H1 (cell line): ENCODE measurements at regions of chr5 and their contacts with region 1.

Region 1: DNA sequence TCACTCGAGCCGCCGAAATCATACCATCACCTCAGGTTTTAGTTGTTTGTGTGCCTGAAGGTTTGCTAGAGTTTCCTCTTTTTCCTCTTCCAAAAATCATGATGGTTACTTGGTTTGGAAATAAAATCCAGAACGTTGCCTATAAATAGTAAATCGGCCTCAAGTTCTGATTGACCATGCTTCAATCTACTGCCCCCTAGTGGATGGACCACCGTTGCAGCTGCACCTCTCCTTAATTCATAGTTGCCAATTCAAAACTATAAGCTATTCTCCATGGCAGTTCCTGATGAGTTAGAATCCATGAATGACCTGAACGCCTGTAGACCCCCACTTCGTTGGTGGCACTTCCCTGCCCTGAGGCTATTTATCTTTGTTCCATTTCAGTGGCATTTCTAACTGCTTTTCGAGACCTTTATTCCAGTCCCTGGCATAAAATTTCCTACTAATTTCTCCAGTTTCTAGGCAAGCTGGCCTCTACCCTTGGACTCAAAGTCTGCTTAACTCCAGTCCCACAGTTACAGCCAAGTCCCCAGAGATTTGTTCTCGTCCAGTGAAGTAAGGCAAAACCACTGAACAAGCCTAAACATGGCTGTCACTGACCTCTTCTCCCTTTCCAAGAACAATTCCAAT is 422.6 kb downstream of the EFNA5 start:
- DNase-seq: peak; percentile 34 to 87
- H3K4me3 ChIP-seq: no peak overlapping the region
- H3K27ac ChIP-seq: no peak overlapping the region
- H3K4me1 ChIP-seq: no peaks in the 10 kb centered on the region; a peak in 1 of 7 replicates
- H3K27me3 ChIP-seq: no peaks in the 10 kb centered on the region
- CTCF ChIP-seq: peak; percentile 61 to 91 (median 67)
- EP300 ChIP-seq: no peak
- POLR2A ChIP-seq: no peak
- RAD21 ChIP-seq: peak; percentile 80 to 85

Region 2: GRCh38 chr5:107104040-107104995 is 143.9 kb before region 1 on chr5:
- CTCF ChIA-PET with region 1: interaction called, 20 read pairs
- POLR2A ChIA-PET with region 1: no interaction called
- DNase-seq: peak in 1 of 2 experiments; percentile 51
- H3K4me3 ChIP-seq: no peak overlapping the region
- H3K27ac ChIP-seq: no peak overlapping the region
- H3K4me1 ChIP-seq: no peaks in the 10 kb centered on the region
- H3K27me3 ChIP-seq: peaks cover 0 to 1% (median 0%) of the 10 kb centered on the region in 4 experiments; a peak in 1 of 7 replicates
- CTCF ChIP-seq: peak; percentile 14 to 71 (median 56)
- EP300 ChIP-seq: no peak
- POLR2A ChIP-seq: no peak
- RAD21 ChIP-seq: peak; percentile 76 to 87

Region 3: GRCh38 chr5:107184066-107184465 is 64.1 kb before region 1 on chr5:
- CTCF ChIA-PET with region 1: no interaction called
- POLR2A ChIA-PET with region 1: no interaction called
- DNase-seq: no peak
- H3K4me3 ChIP-seq: no peak overlapping the region
- H3K27ac ChIP-seq: no peak overlapping the region
- H3K4me1 ChIP-seq: no peaks in the 10 kb centered on the region
- H3K27me3 ChIP-seq: no peaks in the 10 kb centered on the region
- CTCF ChIP-seq: no peak
- EP300 ChIP-seq: no peak
- POLR2A ChIP-seq: no peak
- RAD21 ChIP-seq: no peak

Region 4: GRCh38 chr5:107235167-107235566 is 13.0 kb before region 1 on chr5:
- CTCF ChIA-PET with region 1: interaction called, 23 read pairs
- POLR2A ChIA-PET with region 1: no interaction called
- DNase-seq: no peak
- H3K4me3 ChIP-seq: no peak overlapping the region
- H3K27ac ChIP-seq: no peak overlapping the region
- H3K4me1 ChIP-seq: no peaks in the 10 kb centered on the region
- H3K27me3 ChIP-seq: no peaks in the 10 kb centered on the region
- CTCF ChIP-seq: no peak
- EP300 ChIP-seq: no peak
- POLR2A ChIP-seq: no peak
- RAD21 ChIP-seq: no peak

Region 5: GRCh38 chr5:107268241-107268640 is 20.1 kb after region 1 on chr5:
- CTCF ChIA-PET with region 1: interaction called, 20 read pairs
- POLR2A ChIA-PET with region 1: no interaction called
- DNase-seq: no peak
- H3K4me3 ChIP-seq: no peak overlapping the region
- H3K27ac ChIP-seq: no peak overlapping the region
- H3K4me1 ChIP-seq: 0 out of 7 replicates have a peak, but pooled peaks cover 0 to 2% (median 0%) of the 10 kb centered on the region in 4 experiments
- H3K27me3 ChIP-seq: no peaks in the 10 kb centered on the region
- CTCF ChIP-seq: no peak
- EP300 ChIP-seq: no peak
- POLR2A ChIP-seq: no peak
- RAD21 ChIP-seq: no peak

Region 6: GRCh38 chr5:107322936-107323335 is 74.8 kb after region 1 on chr5:
- CTCF ChIA-PET with region 1: no interaction called
- POLR2A ChIA-PET with region 1: no interaction called
- DNase-seq: no peak
- H3K4me3 ChIP-seq: no peak overlapping the region
- H3K27ac ChIP-seq: no peak overlapping the region
- H3K4me1 ChIP-seq: no peaks in the 10 kb centered on the region
- H3K27me3 ChIP-seq: peaks cover 0 to 1% (median 0%) of the 10 kb centered on the region in 4 experiments; a peak in 1 of 7 replicates
- CTCF ChIP-seq: no peak
- EP300 ChIP-seq: no peak
- POLR2A ChIP-seq: no peak
- RAD21 ChIP-seq: no peak

Region 7: DNA sequence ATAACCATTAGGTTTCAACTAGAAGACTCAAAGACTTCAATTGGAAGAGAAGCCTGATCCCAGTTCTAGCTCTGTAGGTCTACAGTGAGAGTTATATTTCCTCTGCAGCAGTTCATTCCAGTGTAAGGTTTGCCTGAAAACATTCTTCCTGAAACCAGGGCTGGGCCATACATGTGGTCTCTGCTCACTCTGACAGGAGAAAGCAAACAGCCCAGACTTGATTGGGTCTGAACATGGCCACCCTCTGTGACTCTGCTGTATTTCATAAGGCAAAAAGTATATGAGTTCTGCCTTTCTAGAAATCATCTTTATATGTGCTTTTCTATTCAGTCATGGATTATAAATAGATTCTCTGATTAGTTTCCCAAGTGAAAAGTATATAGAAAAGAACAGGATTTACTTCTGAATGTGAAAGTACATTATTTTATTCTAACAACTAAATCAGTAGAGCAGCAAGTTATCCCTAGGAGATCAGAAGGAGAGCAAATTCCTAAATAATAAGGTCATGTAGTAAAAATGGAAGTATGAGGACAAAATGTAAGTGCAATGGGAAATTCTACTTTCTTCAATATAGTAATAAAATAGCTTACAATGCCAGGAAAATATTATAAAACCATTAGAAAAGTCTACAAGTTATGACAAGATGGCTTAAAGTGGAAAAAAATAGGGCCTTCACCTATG is 278.2 kb after region 1 on chr5:
- CTCF ChIA-PET with region 1: no interaction called
- POLR2A ChIA-PET with region 1: no interaction called
- DNase-seq: no peak
- H3K4me3 ChIP-seq: no peak overlapping the region
- H3K27ac ChIP-seq: no peak overlapping the region
- H3K4me1 ChIP-seq: peaks cover 6 to 20% (median 14%) of the 10 kb centered on the region in 4 experiments; a peak in 5 of 7 replicates
- H3K27me3 ChIP-seq: no peaks in the 10 kb centered on the region
- CTCF ChIP-seq: no peak
- EP300 ChIP-seq: no peak
- POLR2A ChIP-seq: no peak
- RAD21 ChIP-seq: no peak